T-cell (primary cell): ENCODE measurements at regions of chr1 and their contacts with region 1.

Region 1: GRCh38 chr1:207797229-207797961 is 45.5 kb downstream of the CD46 start:
- DNase-seq: peak; percentile 36 to 83 (median 70)
- ATAC-seq: peak; percentile 75 to 82 (median 78)
- H3K4me3 ChIP-seq: no peak overlapping the region
- H3K4me3 Mint-ChIP-seq: peak overlapping the region in 1 of 3 donors; percentile 49
- H3K27ac ChIP-seq: no peak overlapping the region
- H3K27ac Mint-ChIP-seq: peak overlapping the region; percentile 6 to 31
- H3K4me1 ChIP-seq: peaks cover 2 to 16% of the 10 kb centered on the region in 2 experiments
- H3K4me1 Mint-ChIP-seq: peaks cover 40 to 48% (median 47%) of the 10 kb centered on the region in 3 donors
- H3K27me3 ChIP-seq: no peaks in the 10 kb centered on the region
- H3K27me3 Mint-ChIP-seq: no peaks in the 10 kb centered on the region

Region 2: DNA sequence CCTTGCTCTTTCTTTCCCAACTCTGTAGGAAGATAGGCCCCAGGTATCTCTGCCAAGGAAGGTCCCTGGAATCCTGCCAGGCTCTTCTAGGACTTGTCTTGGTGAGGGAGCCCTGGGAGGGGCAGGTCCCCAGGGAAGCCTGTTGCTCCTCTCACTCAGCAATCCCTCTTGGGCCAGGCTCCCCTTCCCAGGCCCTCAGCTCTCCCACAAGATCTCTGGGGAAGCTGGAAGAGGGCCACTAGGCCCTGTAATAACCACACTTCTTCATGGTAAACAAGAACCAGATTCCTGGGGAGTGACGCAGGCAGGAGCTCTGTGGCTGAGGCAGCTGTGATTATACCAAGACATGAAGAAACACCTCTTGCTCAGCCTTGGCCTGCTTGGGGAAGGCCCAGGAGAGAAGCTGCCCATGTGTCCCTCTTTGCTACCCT is 1122.6 kb before region 1 on chr1:
- CTCF ChIA-PET with region 1: no interaction called
- POLR2A ChIA-PET with region 1: no interaction called
- DNase-seq: no peak
- ATAC-seq: no peak
- H3K4me3 ChIP-seq: no peak overlapping the region
- H3K4me3 Mint-ChIP-seq: no peak overlapping the region
- H3K27ac ChIP-seq: no peak overlapping the region
- H3K27ac Mint-ChIP-seq: no peak overlapping the region
- H3K4me1 ChIP-seq: no peaks in the 10 kb centered on the region
- H3K4me1 Mint-ChIP-seq: peaks cover 0 to 4% (median 0%) of the 10 kb centered on the region in 3 donors
- H3K27me3 ChIP-seq: no peaks in the 10 kb centered on the region
- H3K27me3 Mint-ChIP-seq: peaks cover 0 to 1% of the 10 kb centered on the region in 2 donors

Region 3: GRCh38 chr1:207128336-207128921 is 669.0 kb before region 1 on chr1:
- CTCF ChIA-PET with region 1: no interaction called
- POLR2A ChIA-PET with region 1: no interaction called
- DNase-seq: no peak
- ATAC-seq: no peak
- H3K4me3 ChIP-seq: no peak overlapping the region
- H3K4me3 Mint-ChIP-seq: no peak overlapping the region
- H3K27ac ChIP-seq: no peak overlapping the region
- H3K27ac Mint-ChIP-seq: peak overlapping the region in 1 of 2 donors; percentile 16
- H3K4me1 ChIP-seq: no peaks in the 10 kb centered on the region
- H3K4me1 Mint-ChIP-seq: no peaks in the 10 kb centered on the region
- H3K27me3 ChIP-seq: no peaks in the 10 kb centered on the region
- H3K27me3 Mint-ChIP-seq: peaks cover 2 to 4% of the 10 kb centered on the region in 2 donors

Region 4: GRCh38 chr1:207868774-207869721 is 71.7 kb after region 1 on chr1:
- CTCF ChIA-PET with region 1: interaction called in 1 of 2 experiments, 12 read pairs
- POLR2A ChIA-PET with region 1: no interaction called
- DNase-seq: peak; percentile 31 to 90 (median 59)
- ATAC-seq: peak; percentile 64 to 79 (median 70)
- H3K4me3 ChIP-seq: peak overlapping the region; percentile 91
- H3K4me3 Mint-ChIP-seq: peak overlapping the region; percentile 91 to 97 (median 93)
- H3K27ac ChIP-seq: peak overlapping the region; percentile 91
- H3K27ac Mint-ChIP-seq: peak overlapping the region; percentile 92 to 95
- H3K4me1 ChIP-seq: peaks cover 24 to 79% of the 10 kb centered on the region in 2 experiments
- H3K4me1 Mint-ChIP-seq: peaks cover 82 to 89% (median 86%) of the 10 kb centered on the region in 3 donors
- H3K27me3 ChIP-seq: no peaks in the 10 kb centered on the region
- H3K27me3 Mint-ChIP-seq: no peaks in the 10 kb centered on the region

Region 5: GRCh38 chr1:207963427-207964194 is 166.2 kb after region 1 on chr1:
- CTCF ChIA-PET with region 1: interaction called, 3 to 12 read pairs
- POLR2A ChIA-PET with region 1: no interaction called
- DNase-seq: peak; percentile 42 to 90 (median 73)
- ATAC-seq: peak; percentile 85 to 93 (median 87)
- H3K4me3 ChIP-seq: peak overlapping the region; percentile 79 to 88
- H3K4me3 Mint-ChIP-seq: peak overlapping the region; percentile 77 to 86 (median 79)
- H3K27ac ChIP-seq: peak overlapping the region; percentile 42
- H3K27ac Mint-ChIP-seq: peak overlapping the region in 1 of 2 donors; percentile 69
- H3K4me1 ChIP-seq: peaks cover 0 to 25% of the 10 kb centered on the region in 2 experiments
- H3K4me1 Mint-ChIP-seq: peaks cover 12 to 18% (median 16%) of the 10 kb centered on the region in 3 donors
- H3K27me3 ChIP-seq: peaks cover 0 to 35% of the 10 kb centered on the region in 2 experiments
- H3K27me3 Mint-ChIP-seq: peaks cover 20 to 21% of the 10 kb centered on the region in 2 donors